PC-9 (cell line): ENCODE measurements at regions of chr1 and their contacts with region 1.

Region 1: GRCh38 chr1:8817406-8818324 is at the start of gene RERE:
- DNase-seq: peak; percentile 71 to 96
- H3K4me3 ChIP-seq: peak within 1 kb of the TSS; percentile 92
- H3K27ac ChIP-seq: peak within 1 kb of the TSS; percentile 73
- H3K4me1 ChIP-seq: peaks cover 47% of the 10 kb centered on the region
- H3K27me3 ChIP-seq: no peaks in the 10 kb centered on the region
- CTCF ChIP-seq: no peak
- total RNA-seq, gene RERE: 73.4 and 98.7 TPM in 2 replicates

Region 2: DNA sequence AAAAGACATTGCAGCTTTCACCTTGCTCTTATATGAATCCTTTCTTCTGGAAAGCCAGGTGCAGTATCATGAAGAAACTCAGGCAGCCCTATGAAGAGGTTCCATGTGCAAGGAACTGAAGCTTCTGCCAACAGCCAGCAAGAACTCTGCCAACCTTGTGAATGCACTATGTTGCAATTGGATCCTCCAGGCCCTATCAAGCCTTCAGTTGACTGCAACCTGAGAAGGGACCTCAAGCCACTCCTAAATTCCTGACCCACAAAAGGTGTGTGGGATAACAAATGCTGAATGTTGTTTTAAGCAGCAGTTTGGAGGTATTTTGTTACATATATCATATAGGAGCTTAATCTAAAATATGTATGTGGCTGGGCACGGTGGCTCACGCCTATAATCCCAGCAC is 84.2 kb before region 1 on chr1:
- CTCF ChIA-PET with region 1: no interaction called
- POLR2A ChIA-PET with region 1: no interaction called
- intact Hi-C with region 1: loop called (anchors 5 kb)
- DNase-seq: peak; percentile 68 to 88
- H3K4me3 ChIP-seq: no peak overlapping the region
- H3K27ac ChIP-seq: no peak overlapping the region
- H3K4me1 ChIP-seq: peaks cover 9% of the 10 kb centered on the region; the same call in 1 of the 2 replicates
- H3K27me3 ChIP-seq: no peaks in the 10 kb centered on the region
- CTCF ChIP-seq: no peak

Region 3: DNA sequence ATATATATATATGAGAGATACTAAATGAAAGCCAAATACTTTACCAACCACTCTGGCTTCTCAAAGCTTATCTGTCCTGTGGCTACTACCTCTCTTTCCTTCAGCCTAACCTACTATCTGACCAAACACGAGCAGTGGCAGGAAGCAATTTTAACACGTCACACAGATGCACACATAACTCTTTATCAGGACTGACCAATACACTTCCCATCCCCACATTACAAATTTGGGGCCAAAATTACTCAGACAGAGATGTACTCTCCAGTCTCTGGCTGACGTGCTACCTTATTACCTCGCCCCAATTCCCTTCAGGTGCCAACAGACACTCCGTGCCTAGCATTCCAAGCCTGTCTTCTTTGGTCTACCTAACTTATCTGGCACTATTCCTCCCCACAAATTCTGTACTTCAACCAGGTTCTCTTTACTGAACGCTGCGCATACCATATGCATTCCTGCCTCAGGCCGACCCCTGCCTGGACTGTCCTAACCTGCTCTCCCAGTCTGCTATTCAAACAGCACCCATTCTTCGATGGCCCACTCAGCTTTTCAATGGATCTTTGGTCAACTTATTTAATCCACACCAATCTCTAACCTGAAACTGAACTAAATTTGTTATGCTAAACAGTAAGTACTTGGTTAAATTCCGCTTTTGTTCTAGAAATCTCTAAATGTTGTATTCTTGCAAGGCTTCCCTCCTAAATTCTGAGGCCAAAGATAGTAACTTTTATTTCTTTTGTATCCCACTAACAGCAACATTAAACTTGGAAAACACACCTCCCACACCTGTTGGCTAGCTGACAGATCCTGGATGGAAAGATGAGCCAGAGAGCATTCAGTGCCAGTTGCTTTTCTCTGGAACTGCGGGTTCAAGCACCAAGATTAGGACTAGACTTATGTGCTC is 28.1 kb before region 1 on chr1:
- CTCF ChIA-PET with region 1: no interaction called
- POLR2A ChIA-PET with region 1: no interaction called
- intact Hi-C with region 1: loop called (anchors 1 kb)
- DNase-seq: peak; percentile 61 to 76
- H3K4me3 ChIP-seq: no peak overlapping the region
- H3K27ac ChIP-seq: no peak overlapping the region
- H3K4me1 ChIP-seq: peaks cover 9% of the 10 kb centered on the region
- H3K27me3 ChIP-seq: no peaks in the 10 kb centered on the region
- CTCF ChIP-seq: no peak

Region 4: DNA sequence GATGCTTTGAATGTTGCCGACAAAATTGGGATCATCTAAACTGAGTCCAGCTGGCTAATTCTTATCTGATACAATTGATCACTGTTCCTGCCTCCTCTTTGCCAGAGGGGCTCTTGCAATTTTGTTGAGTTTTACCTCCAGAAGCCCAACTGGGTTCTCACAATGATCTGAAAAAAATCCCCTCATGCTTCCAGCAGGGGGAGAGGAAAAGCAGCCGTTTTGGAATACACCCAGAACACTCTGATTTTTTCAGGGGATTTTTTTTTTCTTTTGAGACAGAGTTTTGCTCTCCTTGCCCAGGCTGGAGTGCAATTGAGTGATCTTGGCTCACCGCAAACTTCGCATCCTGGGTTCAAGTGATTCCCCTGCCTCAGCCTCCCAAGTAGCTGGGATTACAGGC is 13.7 kb after region 1 on chr1:
- CTCF ChIA-PET with region 1: no interaction called
- POLR2A ChIA-PET with region 1: no interaction called
- intact Hi-C with region 1: no loop called
- DNase-seq: no peak
- H3K4me3 ChIP-seq: no peak overlapping the region
- H3K27ac ChIP-seq: no peak overlapping the region
- H3K4me1 ChIP-seq: no peaks in the 10 kb centered on the region
- H3K27me3 ChIP-seq: no peaks in the 10 kb centered on the region
- CTCF ChIP-seq: 0 out of 2 replicates have a peak, but pooled peaks have one; percentile 35

Region 5: GRCh38 chr1:8969937-8970336 is 152.3 kb after region 1 on chr1:
- CTCF ChIA-PET with region 1: no interaction called
- POLR2A ChIA-PET with region 1: interaction called, 22 read pairs
- intact Hi-C with region 1: no loop called
- DNase-seq: no peak
- H3K4me3 ChIP-seq: no peak overlapping the region
- H3K27ac ChIP-seq: no peak overlapping the region
- H3K4me1 ChIP-seq: no peaks in the 10 kb centered on the region
- H3K27me3 ChIP-seq: no peaks in the 10 kb centered on the region
- CTCF ChIP-seq: no peak

Region 6: GRCh38 chr1:10057343-10057742 is 1239.7 kb after region 1 on chr1:
- CTCF ChIA-PET with region 1: no interaction called
- POLR2A ChIA-PET with region 1: no interaction called
- intact Hi-C with region 1: no loop called
- DNase-seq: no peak
- H3K4me3 ChIP-seq: no peak overlapping the region
- H3K27ac ChIP-seq: no peak overlapping the region
- H3K4me1 ChIP-seq: peaks cover 5% of the 10 kb centered on the region
- H3K27me3 ChIP-seq: no peaks in the 10 kb centered on the region
- CTCF ChIP-seq: no peak